ENCODE measurements at regions of chr14 and their contacts with region 1.

Region 1: GRCh38 chr14:99884834-99885648 is 91.8 kb downstream of the EML1 start:
- DNase-seq: no peak
- ATAC-seq: peak; percentile 48 to 75 (median 68)
- H3K4me3 ChIP-seq: no peak overlapping the region
- H3K27ac ChIP-seq: no peak overlapping the region
- H3K4me1 ChIP-seq: peaks cover 0 to 6% (median 0%) of the 10 kb centered on the region in 12 donors
- H3K27me3 ChIP-seq: no peaks in the 10 kb centered on the region
- CTCF ChIP-seq: peak; percentile 68 to 89 (median 82)
- POLR2A ChIP-seq: no peak

Region 2: GRCh38 chr14:98853063-98853729 is 1031.8 kb before region 1 on chr14:
- intact Hi-C with region 1: no loop called
- DNase-seq: no peak
- ATAC-seq: no peak
- H3K4me3 ChIP-seq: no peak overlapping the region
- H3K27ac ChIP-seq: no peak overlapping the region
- H3K4me1 ChIP-seq: no peaks in the 10 kb centered on the region
- H3K27me3 ChIP-seq: peaks cover 0 to 25% (median 3%) of the 10 kb centered on the region in 9 donors
- CTCF ChIP-seq: no peak
- POLR2A ChIP-seq: no peak

Region 3: DNA sequence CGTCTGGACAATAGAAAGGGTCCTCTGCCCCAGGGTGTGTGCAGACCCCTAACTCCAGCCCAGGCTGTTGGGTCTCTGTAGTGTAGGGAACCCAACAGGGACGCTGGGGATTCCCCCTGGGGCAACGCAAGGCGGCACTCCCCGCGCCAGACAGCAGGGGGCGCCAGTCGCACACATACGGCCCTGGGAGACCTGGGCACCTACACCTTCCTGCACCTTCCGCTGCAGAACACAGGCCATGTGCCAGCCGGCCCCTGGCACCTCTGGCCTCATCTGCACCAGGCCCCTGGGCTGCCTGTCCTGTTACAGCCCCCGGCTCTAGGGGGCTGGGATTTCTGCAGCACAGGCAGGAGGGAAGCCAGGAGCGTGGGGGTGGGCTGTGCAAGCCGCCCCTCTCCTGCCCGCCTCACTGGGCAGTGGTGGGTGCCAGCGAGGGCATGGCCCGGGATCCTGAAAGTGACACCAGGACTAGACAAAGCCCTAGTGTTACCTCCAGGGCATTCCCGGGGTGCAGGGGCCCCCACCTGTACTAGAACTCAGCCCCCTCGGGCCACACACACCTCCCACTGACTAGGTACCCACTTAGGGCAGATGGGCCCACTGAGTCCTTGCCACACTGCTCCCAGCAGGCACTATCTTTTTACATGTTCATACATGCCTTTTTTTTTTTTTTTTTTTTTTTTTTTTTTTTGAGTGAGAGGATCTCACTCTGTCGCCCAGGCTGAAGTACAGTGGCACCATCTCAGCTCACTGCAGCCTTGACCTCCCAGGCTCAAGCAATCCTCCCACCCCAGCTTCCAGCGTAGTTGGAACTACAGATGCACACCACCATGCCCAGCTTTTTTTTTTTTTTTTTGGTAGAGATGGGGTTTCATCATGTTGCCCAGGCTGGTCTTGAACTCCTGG is 366.3 kb before region 1 on chr14:
- intact Hi-C with region 1: loop called in 3 of 10 experiments (anchors 10 kb)
- DNase-seq: peak; percentile 59 to 87 (median 71)
- ATAC-seq: peak; percentile 46 to 62 (median 54)
- H3K4me3 ChIP-seq: no peak overlapping the region
- H3K27ac ChIP-seq: no peak overlapping the region
- H3K4me1 ChIP-seq: peaks cover 0 to 31% (median 20%) of the 10 kb centered on the region in 12 donors
- H3K27me3 ChIP-seq: no peaks in the 10 kb centered on the region
- CTCF ChIP-seq: peak; percentile 93 to 99 (median 98)
- POLR2A ChIP-seq: no peak

Region 4: GRCh38 chr14:99524804-99525698 is 360.0 kb before region 1 on chr14:
- intact Hi-C with region 1: loop called in 2 of 10 experiments (anchors 10 kb)
- DNase-seq: peak in 3 of 5 donors; percentile 25 to 46 (median 40)
- ATAC-seq: peak in 3 of 4 donors; percentile 33 to 67 (median 46)
- H3K4me3 ChIP-seq: no peak overlapping the region
- H3K27ac ChIP-seq: peak overlapping the region in 11 of 12 donors; percentile 26 to 84 (median 61)
- H3K4me1 ChIP-seq: peaks cover 6 to 62% (median 38%) of the 10 kb centered on the region in 12 donors
- H3K27me3 ChIP-seq: no peaks in the 10 kb centered on the region
- CTCF ChIP-seq: peak in 10 of 12 donors; percentile 8 to 51 (median 27)
- POLR2A ChIP-seq: no peak

Region 5: DNA sequence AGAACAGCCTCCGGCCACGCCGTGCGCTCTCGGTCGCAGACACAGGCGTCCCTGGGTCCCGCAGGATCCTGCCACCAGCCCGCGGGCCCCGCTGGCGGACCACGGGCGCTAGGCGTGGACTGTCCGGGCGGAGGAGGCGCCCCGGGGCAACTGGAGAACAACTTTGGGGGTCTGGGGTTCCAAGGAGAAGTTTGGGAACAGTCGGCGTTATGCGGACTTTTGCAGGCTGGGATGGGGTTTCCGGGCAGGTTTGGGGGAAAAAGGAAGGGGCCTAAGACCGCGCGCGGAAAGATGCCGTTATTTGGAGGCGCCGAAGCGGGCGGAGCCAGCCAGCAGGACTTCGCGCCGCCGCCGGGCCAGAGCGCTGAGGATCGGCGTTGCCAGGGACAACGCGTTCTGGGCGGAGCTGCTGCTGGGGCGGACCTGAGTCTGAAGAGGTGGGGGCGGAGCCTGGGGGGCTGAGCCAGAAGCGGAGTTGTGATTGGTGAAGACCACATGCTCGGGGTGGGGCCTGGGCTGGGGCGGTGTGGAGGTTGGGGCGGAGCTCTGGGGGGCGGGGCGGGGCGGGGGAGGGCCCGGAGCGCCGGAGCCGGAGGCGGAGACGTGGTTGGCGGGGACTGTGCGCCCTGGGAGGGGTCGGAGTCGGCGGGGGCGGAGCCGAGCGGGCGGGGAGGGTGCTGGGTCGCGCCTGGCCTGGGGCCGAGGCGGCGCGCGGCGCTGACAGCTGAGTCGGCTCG is 201.3 kb before region 1 on chr14 and contains the start of gene CYP46A1:
- intact Hi-C with region 1: loop called (anchors 1 to 5 kb)
- DNase-seq: peak; percentile 100
- ATAC-seq: peak; percentile 97 to 99 (median 98)
- H3K4me3 ChIP-seq: peak within 1 kb of the TSS; percentile 58 to 96 (median 82)
- H3K27ac ChIP-seq: peak within 1 kb of the TSS; percentile 14 to 92 (median 80)
- H3K4me1 ChIP-seq: peaks cover 0 to 24% (median 13%) of the 10 kb centered on the region in 12 donors
- H3K27me3 ChIP-seq: peaks cover 0 to 6% (median 0%) of the 10 kb centered on the region in 9 donors
- CTCF ChIP-seq: peak in 1 of 12 donors; percentile 3
- POLR2A ChIP-seq: peak in 1 of 2 donors; percentile 28
- total RNA-seq, gene CYP46A1: 2.3 to 8.0 (median 3.5) TPM

Region 6: GRCh38 chr14:99729991-99730868 is 154.8 kb before region 1 on chr14:
- intact Hi-C with region 1: loop called (anchors 1 to 2 kb)
- DNase-seq: peak; percentile 61 to 82 (median 70)
- ATAC-seq: peak in 3 of 4 donors; percentile 39 to 73 (median 51)
- H3K4me3 ChIP-seq: peak overlapping the region; percentile 37 to 69 (median 58)
- H3K27ac ChIP-seq: peak overlapping the region in 6 of 12 donors; percentile 26 to 66 (median 42)
- H3K4me1 ChIP-seq: peaks cover 0 to 57% (median 28%) of the 10 kb centered on the region in 12 donors
- H3K27me3 ChIP-seq: peaks cover 0 to 7% (median 0%) of the 10 kb centered on the region in 9 donors
- CTCF ChIP-seq: peak; percentile 60 to 97 (median 94)
- POLR2A ChIP-seq: no peak

Region 7: GRCh38 chr14:99793213-99794150 is 91.6 kb before region 1 on chr14 and contains the start of gene EML1:
- intact Hi-C with region 1: loop called in 7 of 10 experiments (anchors 2 to 10 kb)
- DNase-seq: peak; percentile 88 to 93 (median 89)
- ATAC-seq: peak; percentile 69 to 93 (median 86)
- H3K4me3 ChIP-seq: peak within 1 kb of the TSS; percentile 17 to 73 (median 60)
- H3K27ac ChIP-seq: peak within 1 kb of the TSS; percentile 50 to 94 (median 84)
- H3K4me1 ChIP-seq: peaks cover 0 to 51% (median 31%) of the 10 kb centered on the region in 12 donors
- H3K27me3 ChIP-seq: peaks cover 0 to 15% (median 0%) of the 10 kb centered on the region in 9 donors
- CTCF ChIP-seq: peak in 1 of 12 donors; percentile 7
- POLR2A ChIP-seq: no peak
- total RNA-seq, gene EML1: 26.4 to 49.7 (median 41.5) TPM

Region 8: DNA sequence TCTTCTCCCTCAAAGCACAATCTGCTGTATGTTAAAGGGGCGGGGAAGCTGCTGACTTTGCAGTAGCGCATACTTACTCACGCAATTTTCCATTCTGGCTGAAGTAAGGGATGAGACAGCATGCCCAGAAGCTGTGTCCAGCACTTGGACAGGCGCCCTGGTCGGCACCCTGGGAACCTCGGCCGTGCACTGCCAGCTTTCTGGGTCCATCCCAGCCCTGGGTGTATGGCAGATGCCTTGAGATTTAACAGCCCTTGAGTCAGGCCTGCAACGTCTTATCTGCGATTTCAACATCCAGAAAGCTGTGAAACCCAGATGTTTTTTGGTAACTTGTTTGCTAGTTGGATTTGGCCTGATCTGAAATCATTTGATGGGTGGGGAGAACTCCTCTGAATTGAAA is 75.7 kb before region 1 on chr14:
- intact Hi-C with region 1: loop called in 2 of 10 experiments (anchors 5 kb)
- DNase-seq: peak in 4 of 5 donors; percentile 42 to 83 (median 81)
- ATAC-seq: peak; percentile 63 to 92 (median 82)
- H3K4me3 ChIP-seq: no peak overlapping the region
- H3K27ac ChIP-seq: peak overlapping the region in 10 of 12 donors; percentile 38 to 83 (median 60)
- H3K4me1 ChIP-seq: peaks cover 0 to 43% (median 24%) of the 10 kb centered on the region in 12 donors
- H3K27me3 ChIP-seq: no peaks in the 10 kb centered on the region
- CTCF ChIP-seq: no peak
- POLR2A ChIP-seq: no peak

Region 9: GRCh38 chr14:99899578-99900178 is 14.6 kb after region 1 on chr14:
- intact Hi-C with region 1: no loop called
- DNase-seq: no peak
- ATAC-seq: no peak
- H3K4me3 ChIP-seq: no peak overlapping the region
- H3K27ac ChIP-seq: no peak overlapping the region
- H3K4me1 ChIP-seq: no peaks in the 10 kb centered on the region
- H3K27me3 ChIP-seq: no peaks in the 10 kb centered on the region
- CTCF ChIP-seq: peak; percentile 39 to 67 (median 54)
- POLR2A ChIP-seq: no peak

Measured in heart left ventricle (tissue), 16 donors.